ENCODE measurements at regions of chrX and their contacts with region 1.

Region 1: DNA sequence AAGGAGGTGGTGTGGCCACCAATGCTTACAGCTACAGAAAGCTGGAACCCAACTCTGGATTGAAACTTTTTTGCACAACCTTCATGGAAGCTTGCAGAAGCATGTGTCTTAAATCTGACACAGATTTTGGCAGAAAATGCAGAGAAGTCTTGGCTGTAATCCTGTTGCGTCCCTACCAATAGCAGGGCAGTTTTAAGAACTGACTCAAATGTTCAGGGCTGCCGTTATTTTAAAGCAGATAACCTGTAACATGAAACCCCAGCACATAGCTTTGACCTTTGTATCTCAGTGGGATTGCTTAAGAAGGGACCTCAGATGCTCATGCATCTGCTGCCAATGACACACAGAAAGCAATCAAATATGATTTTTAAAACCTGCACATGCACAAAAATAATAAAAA is at the start of gene VEGFD:
- DNase-seq: no peak
- H3K4me3 ChIP-seq: no peak within 1 kb of the TSS
- H3K27ac ChIP-seq: no peak within 1 kb of the TSS
- H3K4me1 ChIP-seq: peaks cover 0 to 2% (median 0%) of the 10 kb centered on the region in 4 experiments; a peak in 1 of 7 replicates
- H3K27me3 ChIP-seq: no peaks in the 10 kb centered on the region
- CTCF ChIP-seq: no peak
- EP300 ChIP-seq: no peak
- POLR2A ChIP-seq: no peak
- RAD21 ChIP-seq: no peak
- total RNA-seq, gene VEGFD: 0.19 TPM in 1 of 2 replicates, not detected in the other

Region 2: GRCh38 chrX:15373976-15374375 is 10.3 kb before region 1 on chrX:
- CTCF ChIA-PET with region 1: interaction called, 10 read pairs
- POLR2A ChIA-PET with region 1: no interaction called
- DNase-seq: no peak
- H3K4me3 ChIP-seq: no peak overlapping the region
- H3K27ac ChIP-seq: no peak overlapping the region; the same call in 1 of the 2 replicates
- H3K4me1 ChIP-seq: no peaks in the 10 kb centered on the region
- H3K27me3 ChIP-seq: no peaks in the 10 kb centered on the region
- CTCF ChIP-seq: no peak
- EP300 ChIP-seq: no peak
- POLR2A ChIP-seq: no peak
- RAD21 ChIP-seq: no peak

Region 3: DNA sequence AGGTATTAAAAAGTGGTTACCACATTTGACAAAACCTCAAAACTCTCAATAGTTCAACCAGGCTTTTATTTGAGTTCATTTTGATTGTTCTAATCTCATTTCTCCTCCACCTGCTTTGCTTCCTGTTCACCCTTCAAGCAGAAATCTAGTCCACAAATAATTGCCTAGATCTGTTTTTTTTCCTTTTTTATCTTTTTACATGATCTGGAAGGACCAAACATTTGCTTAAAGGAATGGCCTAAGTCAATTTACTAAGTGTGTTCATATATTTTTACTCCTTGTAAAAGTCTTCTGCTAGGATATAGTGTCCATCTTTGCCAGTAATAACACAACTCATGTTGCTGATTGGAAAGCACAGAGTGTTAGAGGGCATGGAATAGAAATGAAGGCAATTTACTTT is 26.1 kb after region 1 on chrX:
- CTCF ChIA-PET with region 1: no interaction called
- POLR2A ChIA-PET with region 1: no interaction called
- DNase-seq: no peak
- H3K4me3 ChIP-seq: no peak overlapping the region
- H3K27ac ChIP-seq: no peak overlapping the region
- H3K4me1 ChIP-seq: no peaks in the 10 kb centered on the region
- H3K27me3 ChIP-seq: no peaks in the 10 kb centered on the region
- CTCF ChIP-seq: no peak
- EP300 ChIP-seq: no peak
- POLR2A ChIP-seq: no peak
- RAD21 ChIP-seq: no peak

Region 4: DNA sequence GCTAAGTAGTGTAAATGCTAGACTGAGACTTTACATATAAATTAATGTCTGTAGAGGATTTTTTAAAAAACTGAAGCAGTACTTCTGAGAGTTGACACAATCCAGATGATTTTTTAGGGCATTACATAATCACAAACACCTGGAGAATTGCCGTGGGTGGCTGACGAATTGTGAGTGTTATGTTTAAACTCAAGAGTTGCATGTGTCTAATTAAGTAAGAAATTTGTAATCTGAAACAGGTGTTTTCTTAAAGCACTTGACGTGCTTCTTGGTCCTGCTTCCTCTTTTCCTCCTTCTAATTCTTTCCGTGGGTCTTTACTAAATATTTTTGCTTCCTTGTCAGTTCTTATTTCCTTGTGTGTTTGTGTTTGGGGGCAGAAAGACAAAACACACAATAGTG is 81.0 kb after region 1 on chrX:
- CTCF ChIA-PET with region 1: interaction called, 17 read pairs
- POLR2A ChIA-PET with region 1: no interaction called
- DNase-seq: no peak
- H3K4me3 ChIP-seq: no peak overlapping the region
- H3K27ac ChIP-seq: no peak overlapping the region
- H3K4me1 ChIP-seq: peaks cover 0 to 2% (median 0%) of the 10 kb centered on the region in 4 experiments; a peak in 2 of 7 replicates
- H3K27me3 ChIP-seq: no peaks in the 10 kb centered on the region
- CTCF ChIP-seq: no peak
- EP300 ChIP-seq: no peak
- POLR2A ChIP-seq: no peak
- RAD21 ChIP-seq: no peak

Region 5: GRCh38 chrX:15471016-15471415 is 86.7 kb after region 1 on chrX:
- CTCF ChIA-PET with region 1: interaction called, 17 read pairs
- POLR2A ChIA-PET with region 1: no interaction called
- DNase-seq: peak in 1 of 2 experiments; percentile 53
- H3K4me3 ChIP-seq: no peak overlapping the region
- H3K27ac ChIP-seq: no peak overlapping the region
- H3K4me1 ChIP-seq: peaks cover 0 to 3% (median under 1%) of the 10 kb centered on the region in 4 experiments; a peak in 3 of 7 replicates
- H3K27me3 ChIP-seq: no peaks in the 10 kb centered on the region
- CTCF ChIP-seq: peak; percentile 56 to 70 (median 57)
- EP300 ChIP-seq: no peak
- POLR2A ChIP-seq: no peak
- RAD21 ChIP-seq: peak; percentile 70 to 78

Measured in H1 (cell line).